ENCODE measurements at regions of chr19 and their contacts with region 1.

Region 1: GRCh38 chr19:41570639-41571112 is 5.3 kb upstream of the CEACAM21 start:
- DNase-seq: peak; percentile 84
- H3K4me3 ChIP-seq: no peak overlapping the region
- H3K27ac ChIP-seq: no peak overlapping the region
- H3K4me1 ChIP-seq: no peaks in the 10 kb centered on the region
- H3K27me3 ChIP-seq: peaks cover 64% of the 10 kb centered on the region
- CTCF ChIP-seq: peak; percentile 77 to 91 (median 81)
- EP300 ChIP-seq: no peak
- POLR2A ChIP-seq: no peak

Region 2: DNA sequence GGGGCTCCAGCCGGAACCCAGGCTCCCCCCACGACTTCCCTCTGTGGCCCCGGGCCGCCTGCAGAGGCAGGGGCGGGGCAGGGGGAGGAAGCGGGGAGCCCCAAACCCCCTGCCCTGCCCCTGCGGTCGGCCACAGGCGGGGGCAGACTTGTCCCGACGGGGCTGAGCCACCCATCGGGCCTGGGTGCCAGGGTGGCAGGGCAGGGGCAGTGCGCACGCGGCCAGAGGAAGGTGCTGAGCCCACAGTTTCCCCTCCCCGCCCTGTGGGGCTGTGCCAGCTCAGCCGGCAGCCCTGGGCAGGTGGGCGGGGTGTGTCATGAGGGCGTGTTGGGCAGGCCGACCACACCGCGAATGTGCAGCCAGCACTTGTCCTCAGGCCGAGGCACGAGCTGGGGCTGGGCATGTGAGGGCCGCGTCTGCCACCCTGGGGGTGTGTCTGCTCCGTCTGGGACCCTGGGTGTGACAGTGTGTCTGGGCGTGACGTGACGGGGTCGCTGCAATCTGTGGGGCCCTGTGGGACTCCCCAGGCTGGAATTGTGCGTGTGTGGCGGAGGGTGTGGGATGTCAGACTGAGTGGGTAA is 243.0 kb before region 1 on chr19:
- in situ Hi-C with region 1: loop called in 1 of 4 experiments (anchors 25 kb)
- intact Hi-C with region 1: no loop called
- DNase-seq: peak; percentile 88
- H3K4me3 ChIP-seq: peak overlapping the region in 2 of 4 donors; percentile 21 to 35
- H3K27ac ChIP-seq: peak overlapping the region; percentile 78 to 89 (median 83)
- H3K4me1 ChIP-seq: peaks cover 31 to 70% (median 48%) of the 10 kb centered on the region in 4 donors
- H3K27me3 ChIP-seq: peaks cover 20% of the 10 kb centered on the region
- CTCF ChIP-seq: no peak
- EP300 ChIP-seq: no peak
- POLR2A ChIP-seq: peak; percentile 31

Region 3: GRCh38 chr19:41439441-41440222 is 131.0 kb before region 1 on chr19 and contains the start of gene DMAC2:
- in situ Hi-C with region 1: loop called in 1 of 4 experiments (anchors 10 kb)
- intact Hi-C with region 1: no loop called
- DNase-seq: peak; percentile 99
- H3K4me3 ChIP-seq: peak within 1 kb of the TSS; percentile 64 to 88 (median 80)
- H3K27ac ChIP-seq: peak within 1 kb of the TSS; percentile 94 to 99 (median 97)
- H3K4me1 ChIP-seq: peaks cover 0 to 20% (median 5%) of the 10 kb centered on the region in 4 donors
- H3K27me3 ChIP-seq: no peaks in the 10 kb centered on the region
- CTCF ChIP-seq: peak; percentile 37 to 57 (median 41)
- EP300 ChIP-seq: no peak
- POLR2A ChIP-seq: peak; percentile 82
- total RNA-seq, gene DMAC2: 15.9 to 65.8 (median 50.1) TPM

Region 4: GRCh38 chr19:41449079-41449864 is 121.4 kb before region 1 on chr19:
- in situ Hi-C with region 1: loop called (anchors 5 to 25 kb)
- intact Hi-C with region 1: loop called (anchors 5 kb)
- DNase-seq: peak; percentile 78
- H3K4me3 ChIP-seq: peak overlapping the region in 1 of 4 donors; percentile 20
- H3K27ac ChIP-seq: no peak overlapping the region
- H3K4me1 ChIP-seq: peaks cover 0 to 5% (median 0%) of the 10 kb centered on the region in 4 donors
- H3K27me3 ChIP-seq: peaks cover 21% of the 10 kb centered on the region
- CTCF ChIP-seq: peak; percentile 94 to 99 (median 98)
- EP300 ChIP-seq: no peak
- POLR2A ChIP-seq: no peak

Region 5: DNA sequence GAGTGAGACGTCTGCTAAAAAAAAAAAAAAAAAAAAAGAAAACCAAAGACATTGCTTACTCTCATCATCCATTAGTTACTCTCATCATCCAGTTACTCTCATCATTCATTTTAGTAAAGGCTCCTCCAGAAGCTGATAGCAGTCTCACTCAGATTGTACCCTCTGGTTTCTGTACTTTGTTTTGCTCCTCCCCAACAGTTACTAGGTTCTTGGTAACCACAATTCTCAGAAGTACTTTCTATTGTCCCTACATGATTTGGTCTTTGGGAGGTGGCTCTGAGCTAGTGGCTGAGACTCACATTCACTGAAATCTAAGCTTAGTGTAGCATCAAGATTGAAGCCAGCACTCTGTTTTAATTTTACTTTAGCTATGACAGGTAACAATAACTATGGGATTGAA is 113.4 kb before region 1 on chr19:
- in situ Hi-C with region 1: loop called in 2 of 4 experiments (anchors 10 to 25 kb)
- intact Hi-C with region 1: no loop called
- DNase-seq: no peak
- H3K4me3 ChIP-seq: no peak overlapping the region
- H3K27ac ChIP-seq: no peak overlapping the region
- H3K4me1 ChIP-seq: peaks cover 0 to 4% (median 0%) of the 10 kb centered on the region in 4 donors
- H3K27me3 ChIP-seq: peaks cover 23% of the 10 kb centered on the region
- CTCF ChIP-seq: no peak
- EP300 ChIP-seq: no peak
- POLR2A ChIP-seq: no peak

Measured in transverse colon (tissue), 4 donors.